ENCODE measurements at regions of chr2 and their contacts with region 1.

Region 1: GRCh38 chr2:12931186-12931844 is 214.6 kb downstream of the TRIB2 start:
- DNase-seq: peak in 3 of 9 experiments; percentile 6 to 51 (median 28)
- ATAC-seq: peak; percentile 40
- H3K4me3 ChIP-seq: no peak overlapping the region
- H3K4me3 Mint-ChIP-seq: no peak overlapping the region
- H3K27ac ChIP-seq: no peak overlapping the region
- H3K27ac Mint-ChIP-seq: no peak overlapping the region
- H3K4me1 ChIP-seq: no peaks in the 10 kb centered on the region
- H3K4me1 Mint-ChIP-seq: no peaks in the 10 kb centered on the region
- H3K27me3 ChIP-seq: no peaks in the 10 kb centered on the region
- H3K27me3 Mint-ChIP-seq: peaks cover 2% of the 10 kb centered on the region
- CTCF ChIP-seq: peak; percentile 70

Region 2: GRCh38 chr2:11863513-11864328 is 1067.6 kb before region 1 on chr2:
- CTCF ChIA-PET with region 1: interaction called, 8 read pairs
- POLR2A ChIA-PET with region 1: no interaction called
- intact Hi-C with region 1: loop called (anchors 1 kb)
- DNase-seq: peak; percentile 27 to 81 (median 68)
- ATAC-seq: peak; percentile 93
- H3K4me3 ChIP-seq: no peak overlapping the region
- H3K4me3 Mint-ChIP-seq: peak overlapping the region; percentile 27
- H3K27ac ChIP-seq: no peak overlapping the region
- H3K27ac Mint-ChIP-seq: no peak overlapping the region
- H3K4me1 ChIP-seq: peaks cover 3% of the 10 kb centered on the region
- H3K4me1 Mint-ChIP-seq: peaks cover 12% of the 10 kb centered on the region
- H3K27me3 ChIP-seq: no peaks in the 10 kb centered on the region
- H3K27me3 Mint-ChIP-seq: peaks cover 2% of the 10 kb centered on the region
- CTCF ChIP-seq: peak; percentile 97

Region 3: DNA sequence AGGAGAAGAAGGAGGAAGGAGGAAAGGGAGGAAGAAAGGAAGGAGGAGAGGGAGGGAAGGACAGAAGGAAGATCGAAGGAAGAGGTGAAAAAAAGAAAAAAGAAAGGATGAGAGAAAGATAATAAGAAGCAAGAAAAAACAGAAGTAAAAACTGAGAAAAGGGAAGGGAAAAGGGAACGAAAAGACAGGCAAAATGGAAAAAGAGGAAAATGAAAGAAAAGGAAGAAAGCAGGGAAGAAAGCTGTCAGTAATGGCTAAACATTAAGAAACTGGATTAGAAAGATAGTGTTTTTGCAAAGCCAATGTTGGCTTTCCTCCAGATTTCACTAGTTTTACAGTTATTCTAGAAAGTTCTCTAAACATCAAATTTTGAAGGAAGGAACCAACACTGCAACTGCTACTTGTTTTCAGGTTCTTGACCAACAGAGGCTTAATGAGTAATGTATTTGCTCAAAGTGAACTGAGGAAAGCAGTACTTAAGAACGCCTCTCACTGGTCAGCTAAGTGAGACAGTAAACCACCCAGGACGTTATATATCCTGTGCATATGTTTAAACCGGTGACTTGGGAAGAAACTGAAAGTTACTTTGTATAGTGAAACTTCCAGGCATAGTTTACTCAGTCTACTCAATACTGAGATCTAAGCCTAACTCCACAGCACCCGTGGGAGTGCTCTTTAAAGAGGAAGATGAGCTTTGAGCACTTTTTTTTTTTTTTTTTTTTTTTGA is 500.7 kb before region 1 on chr2:
- CTCF ChIA-PET with region 1: interaction called, 6 read pairs
- POLR2A ChIA-PET with region 1: no interaction called
- intact Hi-C with region 1: loop called in 1 of 2 experiments (anchors 5 kb)
- DNase-seq: peak in 2 of 9 experiments; percentile 11 to 45
- ATAC-seq: peak; percentile 40
- H3K4me3 ChIP-seq: peak overlapping the region in 1 of 2 experiments; percentile 32
- H3K4me3 Mint-ChIP-seq: peak overlapping the region; percentile 77
- H3K27ac ChIP-seq: peak overlapping the region in 1 of 2 experiments; percentile 17
- H3K27ac Mint-ChIP-seq: peak overlapping the region; percentile 71
- H3K4me1 ChIP-seq: no peaks in the 10 kb centered on the region
- H3K4me1 Mint-ChIP-seq: peaks cover 20% of the 10 kb centered on the region
- H3K27me3 ChIP-seq: no peaks in the 10 kb centered on the region
- H3K27me3 Mint-ChIP-seq: no peaks in the 10 kb centered on the region
- CTCF ChIP-seq: no peak

Region 4: GRCh38 chr2:12728221-12728777 is 203.0 kb before region 1 on chr2:
- CTCF ChIA-PET with region 1: interaction called, 28 read pairs
- POLR2A ChIA-PET with region 1: interaction called, 5 read pairs
- intact Hi-C with region 1: no loop called
- DNase-seq: peak; percentile 15 to 84 (median 64)
- ATAC-seq: peak; percentile 83
- H3K4me3 ChIP-seq: peak overlapping the region; percentile 6 to 28
- H3K4me3 Mint-ChIP-seq: peak overlapping the region; percentile 59
- H3K27ac ChIP-seq: peak overlapping the region; percentile 18 to 65
- H3K27ac Mint-ChIP-seq: peak overlapping the region; percentile 77
- H3K4me1 ChIP-seq: peaks cover 46% of the 10 kb centered on the region
- H3K4me1 Mint-ChIP-seq: peaks cover 87% of the 10 kb centered on the region
- H3K27me3 ChIP-seq: no peaks in the 10 kb centered on the region
- H3K27me3 Mint-ChIP-seq: no peaks in the 10 kb centered on the region
- CTCF ChIP-seq: no peak

Region 5: DNA sequence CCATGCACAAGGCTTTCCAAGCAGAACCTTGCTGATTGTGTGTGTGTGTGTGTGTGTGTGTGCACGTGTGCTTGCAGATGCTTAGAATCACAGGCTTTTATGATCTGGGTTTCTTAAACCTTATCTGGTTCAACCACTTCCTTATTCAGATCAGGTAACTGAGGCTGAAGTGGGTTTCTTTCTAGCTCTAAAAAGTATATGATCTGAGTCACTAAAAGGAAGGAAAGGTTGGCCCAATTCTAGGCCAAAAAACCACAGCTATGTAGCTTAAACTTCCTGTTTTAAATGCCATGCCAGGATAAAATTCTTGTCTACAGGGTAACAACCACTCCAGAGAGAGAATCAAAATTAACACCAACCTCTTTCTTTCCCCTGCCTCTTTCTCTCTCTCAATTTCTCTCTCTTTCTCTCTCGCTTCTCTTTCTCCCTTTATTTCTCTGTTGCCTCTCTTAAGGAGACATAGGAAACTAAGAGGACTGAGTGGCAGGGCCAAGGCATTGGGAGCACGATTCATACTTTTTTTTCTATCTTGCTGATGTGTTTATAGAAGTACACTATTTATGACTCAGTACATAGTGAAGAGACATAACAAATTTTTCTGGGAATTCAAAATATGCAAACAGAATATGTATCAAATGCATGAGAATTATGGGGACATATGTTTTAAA is 74.2 kb before region 1 on chr2:
- CTCF ChIA-PET with region 1: interaction called, 4 read pairs
- POLR2A ChIA-PET with region 1: no interaction called
- intact Hi-C with region 1: loop called in 1 of 2 experiments (anchors 5 kb)
- DNase-seq: peak in 7 of 9 experiments; percentile 12 to 78 (median 32)
- ATAC-seq: peak; percentile 87
- H3K4me3 ChIP-seq: no peak overlapping the region
- H3K4me3 Mint-ChIP-seq: no peak overlapping the region
- H3K27ac ChIP-seq: peak overlapping the region in 1 of 2 experiments; percentile 41
- H3K27ac Mint-ChIP-seq: no peak overlapping the region
- H3K4me1 ChIP-seq: peaks cover 41% of the 10 kb centered on the region
- H3K4me1 Mint-ChIP-seq: peaks cover 16% of the 10 kb centered on the region
- H3K27me3 ChIP-seq: no peaks in the 10 kb centered on the region
- H3K27me3 Mint-ChIP-seq: peaks cover 12% of the 10 kb centered on the region
- CTCF ChIP-seq: no peak

Region 6: GRCh38 chr2:12918835-12919445 is 12.4 kb before region 1 on chr2:
- CTCF ChIA-PET with region 1: interaction called, 44 read pairs
- POLR2A ChIA-PET with region 1: interaction called, 3 read pairs
- intact Hi-C with region 1: no loop called
- DNase-seq: no peak
- ATAC-seq: no peak
- H3K4me3 ChIP-seq: no peak overlapping the region
- H3K4me3 Mint-ChIP-seq: no peak overlapping the region
- H3K27ac ChIP-seq: no peak overlapping the region
- H3K27ac Mint-ChIP-seq: no peak overlapping the region
- H3K4me1 ChIP-seq: no peaks in the 10 kb centered on the region
- H3K4me1 Mint-ChIP-seq: no peaks in the 10 kb centered on the region
- H3K27me3 ChIP-seq: no peaks in the 10 kb centered on the region
- H3K27me3 Mint-ChIP-seq: peaks cover 3% of the 10 kb centered on the region
- CTCF ChIP-seq: no peak

Measured in CD8-positive, alpha-beta T cell (primary cell).